ENCODE measurements at regions of chr14 and their contacts with region 1.

Region 1: GRCh38 chr14:49767562-49768300 is at the start of gene KLHDC2:
- DNase-seq: peak; percentile 85
- H3K4me3 Mint-ChIP-seq: peak within 1 kb of the TSS; percentile 86
- H3K27ac Mint-ChIP-seq: peak within 1 kb of the TSS; percentile 98
- H3K4me1 Mint-ChIP-seq: peaks cover 18% of the 10 kb centered on the region
- H3K27me3 Mint-ChIP-seq: no peaks in the 10 kb centered on the region
- CTCF ChIP-seq: peak; percentile 14
- total RNA-seq, gene KLHDC2: 28.3 and 32.4 TPM in 2 replicates

Region 2: GRCh38 chr14:49598485-49599300 is 169.0 kb before region 1 on chr14 and contains the start of gene LRR1:
- CTCF ChIA-PET with region 1: interaction called, 4 read pairs
- POLR2A ChIA-PET with region 1: interaction called, 30 read pairs
- intact Hi-C with region 1: no loop called
- DNase-seq: peak; percentile 87
- H3K4me3 Mint-ChIP-seq: peak within 1 kb of the TSS; percentile 98
- H3K27ac Mint-ChIP-seq: peak within 1 kb of the TSS; percentile 99
- H3K4me1 Mint-ChIP-seq: peaks cover 6% of the 10 kb centered on the region
- H3K27me3 Mint-ChIP-seq: no peaks in the 10 kb centered on the region
- CTCF ChIP-seq: no peak
- total RNA-seq, gene LRR1: 17.0 and 19.8 TPM in 2 replicates

Region 3: DNA sequence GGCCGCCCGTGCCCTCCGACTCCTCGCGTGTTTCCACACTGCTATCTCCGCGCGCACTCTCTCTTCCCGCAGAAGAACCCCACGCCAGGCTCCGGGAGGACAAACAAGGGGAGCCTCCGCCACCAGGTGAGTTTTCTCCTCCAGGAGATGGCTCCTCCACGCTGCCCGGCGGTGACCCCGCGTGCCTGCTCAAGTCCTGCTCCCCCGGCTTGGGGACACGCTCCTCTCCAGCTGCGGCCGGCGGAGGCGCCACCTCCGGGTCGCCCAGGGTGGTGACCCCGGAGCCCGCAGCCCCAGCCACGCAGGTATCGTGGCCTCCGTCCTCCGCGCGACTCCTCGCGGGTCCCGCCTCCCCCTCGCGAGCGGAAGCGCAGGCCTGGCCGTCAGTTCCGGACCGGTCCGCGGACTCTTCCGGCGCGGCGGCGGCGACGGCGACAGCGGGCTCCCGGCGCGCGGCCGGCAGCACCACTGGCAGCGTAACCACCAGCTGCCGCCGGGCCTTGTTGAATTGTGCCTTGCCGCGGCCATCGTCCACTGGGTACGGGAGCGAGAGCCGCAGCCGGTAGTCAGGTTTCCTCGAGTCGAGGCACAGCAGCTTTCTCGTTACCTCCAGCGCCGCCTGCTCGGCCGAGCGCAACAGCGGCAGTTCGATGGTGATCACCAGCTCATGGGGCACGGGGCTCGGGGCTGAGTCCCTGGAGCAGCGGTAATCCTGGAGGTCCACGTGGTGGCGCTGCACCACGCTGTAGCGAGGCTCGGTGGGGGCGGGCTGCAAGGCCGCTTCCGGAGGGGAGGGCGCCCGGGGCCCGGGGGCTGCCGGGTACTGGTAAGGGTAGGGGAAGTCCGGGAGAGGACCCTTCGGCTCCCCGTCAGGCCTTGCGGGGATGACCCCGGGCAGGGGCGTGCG is 133.8 kb before region 1 on chr14:
- CTCF ChIA-PET with region 1: interaction called, 42 read pairs
- POLR2A ChIA-PET with region 1: interaction called, 207 read pairs
- intact Hi-C with region 1: loop called (anchors 1 kb)
- DNase-seq: peak; percentile 92
- H3K4me3 Mint-ChIP-seq: peak overlapping the region; percentile 95
- H3K27ac Mint-ChIP-seq: peak overlapping the region; percentile 99
- H3K4me1 Mint-ChIP-seq: peaks cover 14% of the 10 kb centered on the region
- H3K27me3 Mint-ChIP-seq: no peaks in the 10 kb centered on the region
- CTCF ChIP-seq: peak; percentile 83

Region 4: GRCh38 chr14:49778421-49778820 is 10.7 kb after region 1 on chr14:
- CTCF ChIA-PET with region 1: interaction called, 6 read pairs
- POLR2A ChIA-PET with region 1: interaction called, 27 read pairs
- intact Hi-C with region 1: no loop called
- DNase-seq: no peak
- H3K4me3 Mint-ChIP-seq: no peak overlapping the region
- H3K27ac Mint-ChIP-seq: no peak overlapping the region
- H3K4me1 Mint-ChIP-seq: no peaks in the 10 kb centered on the region
- H3K27me3 Mint-ChIP-seq: no peaks in the 10 kb centered on the region
- CTCF ChIP-seq: no peak

Region 5: GRCh38 chr14:49892636-49893308 is 125.0 kb after region 1 on chr14 and contains the start of gene ARF6:
- CTCF ChIA-PET with region 1: no interaction called
- POLR2A ChIA-PET with region 1: no interaction called
- intact Hi-C with region 1: no loop called
- DNase-seq: peak; percentile 97
- H3K4me3 Mint-ChIP-seq: peak within 1 kb of the TSS; percentile 92
- H3K27ac Mint-ChIP-seq: peak within 1 kb of the TSS; percentile 99
- H3K4me1 Mint-ChIP-seq: peaks cover 28% of the 10 kb centered on the region
- H3K27me3 Mint-ChIP-seq: no peaks in the 10 kb centered on the region
- CTCF ChIP-seq: no peak
- total RNA-seq, gene ARF6: 111 and 112 TPM in 2 replicates

Region 6: GRCh38 chr14:50116181-50116956 is 348.6 kb after region 1 on chr14 and contains the start of gene VCPKMT:
- CTCF ChIA-PET with region 1: no interaction called
- POLR2A ChIA-PET with region 1: interaction called, 11 read pairs
- intact Hi-C with region 1: no loop called
- DNase-seq: peak; percentile 90
- H3K4me3 Mint-ChIP-seq: peak within 1 kb of the TSS; percentile 93
- H3K27ac Mint-ChIP-seq: peak within 1 kb of the TSS; percentile 99
- H3K4me1 Mint-ChIP-seq: no peaks in the 10 kb centered on the region
- H3K27me3 Mint-ChIP-seq: no peaks in the 10 kb centered on the region
- CTCF ChIP-seq: no peak
- total RNA-seq, gene VCPKMT: 7.2 and 10.4 TPM in 2 replicates